ENCODE measurements at regions of chr6 and their contacts with region 1.

Region 1: DNA sequence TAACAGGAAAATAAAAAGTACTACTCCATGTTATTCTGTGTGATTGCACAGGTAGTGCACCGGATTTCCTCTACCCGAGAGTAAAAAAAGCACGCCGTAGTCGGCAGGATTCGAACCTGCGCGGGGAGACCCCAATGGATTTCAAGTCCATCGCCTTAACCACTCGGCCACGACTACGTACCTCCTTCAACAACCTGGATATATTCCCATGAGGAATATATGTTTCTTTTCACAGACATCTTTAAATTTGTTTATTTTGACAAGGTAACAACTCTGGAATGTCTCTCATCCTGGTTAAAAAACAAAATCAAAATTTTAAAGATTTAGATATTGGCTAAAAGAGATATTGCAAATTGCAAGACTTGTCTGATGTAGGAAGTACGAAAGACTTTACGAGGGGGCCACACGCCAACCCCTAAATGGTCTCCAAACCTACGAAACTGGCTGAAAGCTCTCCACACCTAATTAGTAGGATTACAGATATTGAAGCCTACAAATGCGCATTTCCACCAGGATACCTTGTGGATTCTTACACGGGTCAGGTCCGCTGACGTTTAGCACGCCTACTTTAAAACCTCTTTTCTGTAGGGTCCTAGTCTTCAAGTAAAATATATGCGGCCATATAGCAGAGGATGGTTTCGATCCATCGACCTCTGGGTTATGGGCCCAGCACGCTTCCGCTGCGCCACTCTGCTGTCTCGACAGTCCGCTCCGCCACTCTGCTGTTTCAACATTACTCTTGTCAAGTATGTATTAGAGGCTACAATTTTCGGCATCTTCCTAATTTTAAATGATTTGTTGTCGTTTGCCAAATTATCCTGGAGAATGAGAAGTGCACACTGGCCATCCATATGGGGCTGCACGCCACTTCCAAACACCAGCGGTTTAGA is 52.3 kb upstream of the BTN3A2 start:
- DNase-seq: peak; percentile 84 to 88 (median 85)
- H3K4me3 ChIP-seq: peak overlapping the region; percentile 31 to 73
- H3K4me3 Mint-ChIP-seq: peak overlapping the region; percentile 81 to 95 (median 92)
- H3K27ac ChIP-seq: peak overlapping the region; percentile 56
- H3K27ac Mint-ChIP-seq: peak overlapping the region; percentile 92 to 99 (median 96)
- H3K4me1 ChIP-seq: peaks cover 29% of the 10 kb centered on the region
- H3K4me1 Mint-ChIP-seq: peaks cover 29 to 54% (median 39%) of the 10 kb centered on the region in 4 donors
- H3K27me3 ChIP-seq: no peaks in the 10 kb centered on the region
- H3K27me3 Mint-ChIP-seq: peaks cover 0 to 8% of the 10 kb centered on the region in 2 donors

Region 2: GRCh38 chr6:26249957-26250697 is 62.6 kb before region 1 on chr6:
- CTCF ChIA-PET with region 1: no interaction called
- POLR2A ChIA-PET with region 1: interaction called, 4 read pairs
- intact Hi-C with region 1: loop called (anchors 2 kb)
- DNase-seq: peak; percentile 79 to 88 (median 83)
- H3K4me3 ChIP-seq: peak overlapping the region; percentile 86 to 88
- H3K4me3 Mint-ChIP-seq: peak overlapping the region; percentile 92 to 99 (median 98)
- H3K27ac ChIP-seq: peak overlapping the region; percentile 59
- H3K27ac Mint-ChIP-seq: peak overlapping the region; percentile 85 to 97 (median 94)
- H3K4me1 ChIP-seq: peaks cover 25% of the 10 kb centered on the region
- H3K4me1 Mint-ChIP-seq: peaks cover 28 to 53% (median 40%) of the 10 kb centered on the region in 4 donors
- H3K27me3 ChIP-seq: no peaks in the 10 kb centered on the region
- H3K27me3 Mint-ChIP-seq: no peaks in the 10 kb centered on the region

Region 3: GRCh38 chr6:26260725-26261490 is 51.8 kb before region 1 on chr6:
- CTCF ChIA-PET with region 1: no interaction called
- POLR2A ChIA-PET with region 1: no interaction called
- intact Hi-C with region 1: no loop called
- DNase-seq: no peak
- H3K4me3 ChIP-seq: no peak overlapping the region
- H3K4me3 Mint-ChIP-seq: no peak overlapping the region
- H3K27ac ChIP-seq: no peak overlapping the region
- H3K27ac Mint-ChIP-seq: no peak overlapping the region
- H3K4me1 ChIP-seq: no peaks in the 10 kb centered on the region
- H3K4me1 Mint-ChIP-seq: no peaks in the 10 kb centered on the region
- H3K27me3 ChIP-seq: no peaks in the 10 kb centered on the region
- H3K27me3 Mint-ChIP-seq: no peaks in the 10 kb centered on the region

Region 4: DNA sequence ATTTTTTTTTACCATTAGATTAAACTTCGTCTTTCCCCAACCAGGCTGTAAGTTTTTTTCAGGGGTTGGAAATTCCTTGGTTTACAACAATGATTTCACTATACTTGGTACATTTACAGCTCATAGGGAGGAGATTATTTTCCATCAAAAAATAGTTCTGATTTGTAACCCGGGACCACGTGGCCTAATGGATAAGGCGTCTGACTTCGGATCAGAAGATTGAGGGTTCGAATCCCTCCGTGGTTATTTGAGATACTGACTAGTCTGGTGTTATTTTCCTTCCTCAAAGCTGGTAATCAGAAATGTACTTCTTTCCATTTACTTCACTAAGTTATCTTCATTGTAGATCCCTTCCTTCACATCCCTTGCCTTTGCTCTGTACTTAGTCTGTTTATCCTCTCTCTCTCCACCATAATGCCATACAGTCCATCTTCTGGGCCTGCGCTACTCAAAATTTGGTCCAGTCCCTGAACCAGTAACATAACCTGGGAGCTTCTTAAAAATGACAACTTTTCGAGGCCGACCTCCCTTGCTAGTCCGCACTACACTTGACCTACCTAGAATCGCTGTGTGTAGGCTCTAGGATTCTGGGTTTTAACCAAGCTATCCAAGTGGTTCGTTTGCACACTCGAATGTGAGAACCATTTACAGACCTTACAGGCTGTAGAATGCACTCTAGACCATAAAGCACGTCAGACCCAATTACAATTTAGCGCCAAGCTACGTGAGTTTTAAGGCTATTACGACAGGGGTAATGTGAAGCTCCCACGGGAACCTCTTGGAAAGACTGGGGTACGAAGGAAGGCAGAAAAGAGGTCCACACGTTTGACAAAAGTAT is 10.1 kb after region 1 on chr6:
- CTCF ChIA-PET with region 1: interaction called, 12 read pairs
- POLR2A ChIA-PET with region 1: interaction called, 18 read pairs
- intact Hi-C with region 1: loop called (anchors 1 kb)
- DNase-seq: peak; percentile 75 to 80 (median 79)
- H3K4me3 ChIP-seq: peak overlapping the region in 1 of 2 donors; percentile 62
- H3K4me3 Mint-ChIP-seq: peak overlapping the region; percentile 86 to 92 (median 88)
- H3K27ac ChIP-seq: no peak overlapping the region
- H3K27ac Mint-ChIP-seq: peak overlapping the region; percentile 42 to 98 (median 82)
- H3K4me1 ChIP-seq: peaks cover 12% of the 10 kb centered on the region
- H3K4me1 Mint-ChIP-seq: peaks cover 19 to 30% (median 24%) of the 10 kb centered on the region in 4 donors
- H3K27me3 ChIP-seq: no peaks in the 10 kb centered on the region
- H3K27me3 Mint-ChIP-seq: peaks cover 8 to 22% of the 10 kb centered on the region in 2 donors

Region 5: DNA sequence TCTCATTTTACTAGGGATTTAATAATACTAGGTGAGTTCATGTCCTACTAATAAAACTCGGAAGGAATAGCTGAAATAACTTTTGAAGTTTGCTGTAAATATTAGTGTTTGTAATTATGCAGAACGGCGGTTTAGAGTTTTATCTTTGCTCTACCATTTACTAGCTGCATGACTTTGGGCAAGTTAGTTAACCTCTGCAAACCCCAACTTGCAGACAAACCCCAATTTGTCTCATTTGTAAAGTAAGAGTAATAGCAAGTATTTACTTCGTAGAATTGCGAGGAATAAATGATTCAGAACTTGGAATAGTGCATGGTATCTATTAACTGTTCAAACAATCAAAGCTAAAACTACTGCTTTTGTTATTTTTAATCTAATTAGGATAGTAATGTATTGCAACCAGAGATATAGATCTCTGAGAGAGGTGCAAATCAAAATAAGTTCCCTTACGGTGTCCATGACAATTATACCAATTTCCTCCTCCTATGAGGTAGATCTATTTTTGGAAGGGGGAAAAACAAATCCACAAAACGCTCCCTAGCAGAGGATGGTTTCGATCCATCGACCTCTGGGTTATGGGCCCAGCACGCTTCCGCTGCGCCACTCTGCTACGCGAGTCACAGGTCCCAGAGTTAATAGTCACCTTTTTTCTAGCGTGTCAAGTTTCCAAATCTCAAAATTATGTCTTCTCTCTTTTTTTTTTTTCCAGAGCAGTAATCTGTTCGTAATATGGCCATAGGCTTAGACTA is 17.2 kb after region 1 on chr6:
- CTCF ChIA-PET with region 1: interaction called, 6 read pairs
- POLR2A ChIA-PET with region 1: interaction called, 12 read pairs
- intact Hi-C with region 1: loop called (anchors 1 kb)
- DNase-seq: peak; percentile 51 to 66 (median 62)
- H3K4me3 ChIP-seq: no peak overlapping the region
- H3K4me3 Mint-ChIP-seq: peak overlapping the region; percentile 63 to 86 (median 82)
- H3K27ac ChIP-seq: no peak overlapping the region
- H3K27ac Mint-ChIP-seq: peak overlapping the region; percentile 42 to 98 (median 93)
- H3K4me1 ChIP-seq: peaks cover 32% of the 10 kb centered on the region
- H3K4me1 Mint-ChIP-seq: peaks cover 29 to 43% (median 32%) of the 10 kb centered on the region in 4 donors
- H3K27me3 ChIP-seq: peaks cover 7% of the 10 kb centered on the region
- H3K27me3 Mint-ChIP-seq: peaks cover 15 to 38% of the 10 kb centered on the region in 2 donors

Region 6: DNA sequence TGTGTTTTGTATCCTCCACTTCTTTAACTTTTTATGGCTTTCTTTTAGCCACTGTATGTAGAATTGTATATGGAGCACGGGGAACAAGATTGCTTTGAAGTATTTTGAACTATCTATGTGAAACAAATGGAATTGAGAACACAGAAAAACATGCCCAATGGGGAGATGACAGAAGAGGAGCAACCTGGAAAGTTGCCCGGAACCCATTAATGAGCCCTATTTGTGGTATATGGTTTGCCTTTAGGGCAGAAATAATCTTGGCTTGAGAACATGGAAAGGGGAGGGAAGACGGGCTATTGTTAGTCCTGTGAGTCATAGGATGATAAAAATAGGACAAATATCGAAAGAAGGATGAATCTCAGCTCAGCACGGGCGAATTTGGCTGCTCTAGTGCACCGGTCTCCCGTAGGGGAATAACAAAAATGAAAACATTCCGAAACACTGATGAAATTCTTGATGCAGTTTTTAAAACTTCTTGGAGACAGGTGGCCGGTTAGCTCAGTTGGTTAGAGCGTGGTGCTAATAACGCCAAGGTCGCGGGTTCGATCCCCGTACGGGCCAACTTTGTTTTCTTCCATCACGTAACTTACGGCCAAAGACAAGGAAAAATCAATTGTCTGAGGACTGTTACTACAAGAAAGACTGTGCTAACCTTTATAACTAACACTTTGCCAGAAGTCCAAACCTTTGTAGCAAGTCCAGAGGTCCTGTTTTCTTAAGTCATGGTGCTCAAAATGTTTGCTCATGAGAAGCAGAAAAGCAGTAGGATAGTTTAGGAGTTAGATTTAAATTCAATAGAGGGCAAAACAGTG is 241.1 kb after region 1 on chr6:
- CTCF ChIA-PET with region 1: no interaction called
- POLR2A ChIA-PET with region 1: interaction called, 10 read pairs
- intact Hi-C with region 1: no loop called
- DNase-seq: peak; percentile 83 to 88 (median 86)
- H3K4me3 ChIP-seq: peak overlapping the region; percentile 67 to 93
- H3K4me3 Mint-ChIP-seq: no peak overlapping the region
- H3K27ac ChIP-seq: peak overlapping the region; percentile 31
- H3K27ac Mint-ChIP-seq: no peak overlapping the region
- H3K4me1 ChIP-seq: peaks cover 31% of the 10 kb centered on the region
- H3K4me1 Mint-ChIP-seq: peaks cover 11 to 28% (median 19%) of the 10 kb centered on the region in 4 donors
- H3K27me3 ChIP-seq: no peaks in the 10 kb centered on the region
- H3K27me3 Mint-ChIP-seq: peaks cover 0 to 2% of the 10 kb centered on the region in 2 donors

Region 7: GRCh38 chr6:27472617-27473400 is 1160.1 kb after region 1 on chr6 and contains the start of gene ZNF184:
- CTCF ChIA-PET with region 1: no interaction called
- POLR2A ChIA-PET with region 1: no interaction called
- intact Hi-C with region 1: loop called (anchors 10 kb)
- DNase-seq: peak; percentile 86 to 90 (median 89)
- H3K4me3 ChIP-seq: peak within 1 kb of the TSS; percentile 70 to 98
- H3K4me3 Mint-ChIP-seq: peak within 1 kb of the TSS; percentile 92 to 99 (median 96)
- H3K27ac ChIP-seq: peak within 1 kb of the TSS; percentile 92
- H3K27ac Mint-ChIP-seq: peak within 1 kb of the TSS; percentile 93 to 99 (median 96)
- H3K4me1 ChIP-seq: peaks cover 56% of the 10 kb centered on the region
- H3K4me1 Mint-ChIP-seq: peaks cover 33 to 65% (median 43%) of the 10 kb centered on the region in 4 donors
- H3K27me3 ChIP-seq: no peaks in the 10 kb centered on the region
- H3K27me3 Mint-ChIP-seq: no peaks in the 10 kb centered on the region
- total RNA-seq, gene ZNF184: 15.2 to 17.4 TPM

Measured in CD4-positive, alpha-beta memory T cell (primary cell).